ENCODE measurements at regions of chr7 and their contacts with region 1.

Region 1: DNA sequence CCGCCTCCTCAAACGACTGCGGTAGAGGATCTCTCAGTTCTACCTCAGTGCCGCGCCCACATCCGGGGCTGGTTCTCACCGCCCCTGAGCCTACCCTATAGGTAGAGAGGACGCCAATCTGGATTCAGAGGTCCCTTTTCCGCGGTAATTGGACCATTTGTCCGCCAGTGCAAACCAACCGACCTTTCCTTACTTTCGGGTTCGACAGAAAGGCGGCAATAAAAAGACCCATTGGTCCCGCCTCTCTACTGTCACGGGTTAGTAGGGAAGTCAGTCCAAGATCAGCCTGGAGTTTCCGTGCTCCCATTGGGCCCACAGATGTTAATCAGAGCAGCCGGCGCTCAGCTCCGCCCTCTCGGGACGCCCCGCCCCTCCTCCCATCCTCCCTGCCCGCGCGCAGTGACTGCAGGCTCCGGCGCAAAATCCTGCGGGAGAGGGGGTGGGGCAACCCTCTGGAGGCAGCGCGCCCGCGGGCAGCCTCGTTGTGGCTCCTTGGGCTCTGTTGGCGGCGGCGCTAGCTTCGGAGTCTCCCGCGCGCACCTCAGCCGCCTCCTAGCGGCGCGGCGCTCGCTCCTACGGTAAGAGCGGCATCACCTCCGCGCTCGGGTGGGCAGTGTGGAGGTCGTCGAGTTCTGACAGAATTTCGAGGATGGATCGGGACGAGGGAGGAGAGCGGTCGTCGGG is at the starts of genes PHTF2 and TMEM60:
- DNase-seq: peak; percentile 94
- H3K4me3 Mint-ChIP-seq: peak within 1 kb of the TSS; percentile 96
- H3K27ac Mint-ChIP-seq: peak within 1 kb of the TSS; percentile 96
- H3K4me1 Mint-ChIP-seq: peaks cover 63% of the 10 kb centered on the region
- H3K27me3 Mint-ChIP-seq: no peaks in the 10 kb centered on the region
- total RNA-seq, gene PHTF2: 31.8 and 34.8 TPM in 2 replicates
- total RNA-seq, gene TMEM60: 11.5 and 11.6 TPM in 2 replicates

Region 2: GRCh38 chr7:77536413-77537135 is 262.0 kb before region 1 on chr7:
- intact Hi-C with region 1: loop called (anchors 2 kb)
- DNase-seq: peak; percentile 93
- H3K4me3 Mint-ChIP-seq: peak overlapping the region; percentile 87
- H3K27ac Mint-ChIP-seq: peak overlapping the region; percentile 70
- H3K4me1 Mint-ChIP-seq: peaks cover 14% of the 10 kb centered on the region
- H3K27me3 Mint-ChIP-seq: no peaks in the 10 kb centered on the region

Region 3: GRCh38 chr7:77759294-77759889 is 39.1 kb before region 1 on chr7:
- intact Hi-C with region 1: loop called (anchors 5 kb)
- DNase-seq: peak; percentile 46
- H3K4me3 Mint-ChIP-seq: no peak overlapping the region
- H3K27ac Mint-ChIP-seq: no peak overlapping the region
- H3K4me1 Mint-ChIP-seq: peaks cover 26% of the 10 kb centered on the region
- H3K27me3 Mint-ChIP-seq: no peaks in the 10 kb centered on the region

Region 4: DNA sequence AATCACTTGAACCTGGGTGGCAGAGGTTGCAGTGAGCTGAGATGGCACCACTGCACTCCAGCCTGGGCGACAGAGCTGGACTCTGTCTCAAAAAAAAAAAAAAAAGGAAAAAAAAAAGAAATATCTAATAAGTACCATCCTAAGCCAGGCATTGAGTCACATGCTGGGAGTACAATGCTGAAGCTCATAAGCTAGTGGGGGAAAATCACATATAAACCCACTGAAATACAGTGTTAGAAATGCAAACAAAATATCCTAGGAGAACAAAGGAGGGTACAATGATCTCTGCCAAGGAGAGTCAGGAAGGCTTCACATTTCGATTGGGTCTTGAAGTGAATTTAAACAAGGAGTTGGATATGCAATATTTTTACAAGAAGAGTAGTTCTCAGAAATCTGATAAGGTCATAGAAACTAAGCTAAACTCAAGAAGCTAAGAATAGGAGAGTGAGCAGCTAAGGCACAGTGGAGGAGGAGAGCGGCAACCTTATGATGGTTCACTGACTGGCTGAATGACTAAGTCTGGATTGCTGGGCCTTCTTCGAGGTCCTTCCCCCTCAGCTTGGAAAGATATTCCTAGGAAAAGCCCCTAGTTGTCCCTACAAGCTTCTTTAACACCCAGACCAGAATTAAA is 115.6 kb after region 1 on chr7:
- intact Hi-C with region 1: loop called (anchors 1 kb)
- DNase-seq: no peak
- H3K4me3 Mint-ChIP-seq: peak overlapping the region; percentile 50
- H3K27ac Mint-ChIP-seq: peak overlapping the region; percentile 79
- H3K4me1 Mint-ChIP-seq: peaks cover 40% of the 10 kb centered on the region
- H3K27me3 Mint-ChIP-seq: no peaks in the 10 kb centered on the region

Region 5: GRCh38 chr7:78020136-78020873 is 221.8 kb after region 1 on chr7:
- intact Hi-C with region 1: loop called (anchors 10 kb)
- DNase-seq: no peak
- H3K4me3 Mint-ChIP-seq: peak overlapping the region; percentile 63
- H3K27ac Mint-ChIP-seq: peak overlapping the region; percentile 56
- H3K4me1 Mint-ChIP-seq: peaks cover 17% of the 10 kb centered on the region
- H3K27me3 Mint-ChIP-seq: peaks cover 52% of the 10 kb centered on the region

Measured in activated T-helper 2 cell treated with anti-CD3 and anti-CD28 coated beads, Interferon-gamma antibody, Interleukin-2, Interleukin-4, amounts not matched to agents 10 μg/mL and 5 μg/mL and 100 μg/mL, durations not matched to agents 14 hours and 24 hours and 36 hours (primary cell).